Activated CD4-positive, alpha-beta memory T cell treated with anti-CD3 and anti-CD28 coated beads, Interleukin-2, amount 10 ng/mL, durations not matched to agents 7 days and 5 days (primary cell): ENCODE measurements at regions of chr7 and their contacts with region 1.

Region 1: DNA sequence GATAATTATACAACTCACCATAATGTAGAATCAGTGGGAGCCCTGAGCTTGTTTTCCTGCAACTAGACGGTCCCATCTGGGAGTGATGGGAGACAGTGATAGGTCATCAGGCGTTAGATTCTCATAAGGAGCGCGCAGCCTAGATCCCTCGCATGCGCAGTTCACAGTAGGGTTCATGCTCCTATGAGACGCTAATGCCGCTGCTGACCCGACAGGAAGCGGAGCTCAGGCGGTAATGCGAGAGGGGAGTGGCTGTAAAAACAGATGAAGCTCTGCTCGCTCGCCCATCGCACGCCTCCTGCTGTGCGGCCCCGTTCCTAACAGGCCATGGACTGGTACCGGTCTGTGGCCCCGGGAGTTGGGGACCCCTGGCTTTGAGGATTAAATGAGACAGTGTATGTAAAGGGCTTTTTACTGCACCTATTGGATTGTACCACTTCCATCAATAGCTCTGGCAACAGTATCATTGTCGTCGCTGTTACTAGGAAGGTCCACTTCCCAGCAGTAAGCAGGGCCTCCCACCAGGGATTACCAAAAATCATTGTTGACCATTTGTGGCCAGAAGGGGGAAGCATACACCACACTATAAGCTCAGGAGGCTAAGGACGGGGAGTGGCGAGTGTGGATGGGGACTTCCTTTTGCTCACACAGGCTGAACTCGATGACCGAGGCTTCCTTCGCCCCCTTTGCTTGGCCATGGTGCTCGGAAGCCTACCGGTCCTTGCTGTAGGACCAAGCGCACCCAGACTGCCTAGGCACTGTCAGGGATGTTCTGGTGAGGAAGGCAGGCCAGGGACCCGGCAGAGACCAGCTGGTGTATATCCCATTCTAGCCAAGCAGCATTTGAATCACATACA is 26.4 kb downstream of the AKR1B1 start:
- DNase-seq: peak; percentile 78
- H3K4me3 Mint-ChIP-seq: peak overlapping the region; percentile 68
- H3K27ac Mint-ChIP-seq: peak overlapping the region; percentile 82
- H3K4me1 Mint-ChIP-seq: peaks cover 17% of the 10 kb centered on the region
- H3K27me3 Mint-ChIP-seq: peaks cover 7% of the 10 kb centered on the region

Region 2: DNA sequence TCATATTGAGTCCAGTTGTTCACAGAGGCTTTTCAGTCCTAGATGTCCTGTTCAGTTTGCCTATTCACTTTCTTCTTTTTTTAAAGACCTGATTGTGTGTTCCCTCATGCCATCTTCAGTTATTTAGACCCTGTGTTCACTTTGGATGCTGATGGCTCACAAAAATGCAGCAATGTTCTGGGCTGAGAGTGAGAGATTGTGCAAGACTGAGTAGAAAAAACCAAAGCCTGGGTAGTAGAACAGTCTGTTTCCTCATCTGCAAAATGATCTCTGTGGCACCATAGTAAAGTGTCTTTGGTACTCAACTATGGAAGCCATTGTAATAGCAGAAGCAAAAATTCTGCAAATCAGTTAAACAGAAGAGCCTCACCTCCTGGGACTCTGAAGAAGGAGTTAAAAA is 16.8 kb before region 1 on chr7:
- CTCF ChIA-PET with region 1: no interaction called
- POLR2A ChIA-PET with region 1: no interaction called
- DNase-seq: no peak
- H3K4me3 Mint-ChIP-seq: no peak overlapping the region
- H3K27ac Mint-ChIP-seq: no peak overlapping the region
- H3K4me1 Mint-ChIP-seq: no peaks in the 10 kb centered on the region
- H3K27me3 Mint-ChIP-seq: peaks cover 13% of the 10 kb centered on the region

Region 3: DNA sequence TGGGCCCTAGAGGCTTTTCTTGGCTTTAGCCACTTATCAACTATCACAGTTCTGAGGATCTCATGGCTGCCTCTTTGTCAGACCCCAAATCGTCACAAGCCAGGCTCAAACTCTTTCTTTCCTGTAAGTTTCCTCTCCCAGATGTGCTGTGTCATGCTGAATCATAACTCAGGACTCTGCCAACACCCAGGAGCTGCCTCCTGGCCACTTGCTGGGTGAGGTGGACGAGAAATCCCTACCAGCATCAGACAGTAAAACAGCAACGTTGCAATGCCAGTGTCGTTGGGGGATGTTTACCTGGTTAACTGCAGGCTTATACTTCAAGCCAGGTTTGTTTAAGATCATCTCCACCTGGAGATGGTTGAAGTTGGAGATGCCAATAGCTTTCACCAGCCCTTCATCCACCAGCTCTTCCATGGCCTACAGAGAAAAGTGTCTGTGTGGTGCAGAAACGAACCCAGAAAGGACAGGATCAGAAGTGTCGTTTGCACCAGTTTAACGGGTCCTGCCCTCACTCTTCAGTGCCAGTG is 16.2 kb after region 1 on chr7:
- CTCF ChIA-PET with region 1: interaction called, 11 read pairs
- POLR2A ChIA-PET with region 1: no interaction called
- DNase-seq: no peak
- H3K4me3 Mint-ChIP-seq: no peak overlapping the region
- H3K27ac Mint-ChIP-seq: no peak overlapping the region
- H3K4me1 Mint-ChIP-seq: peaks cover 4% of the 10 kb centered on the region
- H3K27me3 Mint-ChIP-seq: no peaks in the 10 kb centered on the region

Region 4: DNA sequence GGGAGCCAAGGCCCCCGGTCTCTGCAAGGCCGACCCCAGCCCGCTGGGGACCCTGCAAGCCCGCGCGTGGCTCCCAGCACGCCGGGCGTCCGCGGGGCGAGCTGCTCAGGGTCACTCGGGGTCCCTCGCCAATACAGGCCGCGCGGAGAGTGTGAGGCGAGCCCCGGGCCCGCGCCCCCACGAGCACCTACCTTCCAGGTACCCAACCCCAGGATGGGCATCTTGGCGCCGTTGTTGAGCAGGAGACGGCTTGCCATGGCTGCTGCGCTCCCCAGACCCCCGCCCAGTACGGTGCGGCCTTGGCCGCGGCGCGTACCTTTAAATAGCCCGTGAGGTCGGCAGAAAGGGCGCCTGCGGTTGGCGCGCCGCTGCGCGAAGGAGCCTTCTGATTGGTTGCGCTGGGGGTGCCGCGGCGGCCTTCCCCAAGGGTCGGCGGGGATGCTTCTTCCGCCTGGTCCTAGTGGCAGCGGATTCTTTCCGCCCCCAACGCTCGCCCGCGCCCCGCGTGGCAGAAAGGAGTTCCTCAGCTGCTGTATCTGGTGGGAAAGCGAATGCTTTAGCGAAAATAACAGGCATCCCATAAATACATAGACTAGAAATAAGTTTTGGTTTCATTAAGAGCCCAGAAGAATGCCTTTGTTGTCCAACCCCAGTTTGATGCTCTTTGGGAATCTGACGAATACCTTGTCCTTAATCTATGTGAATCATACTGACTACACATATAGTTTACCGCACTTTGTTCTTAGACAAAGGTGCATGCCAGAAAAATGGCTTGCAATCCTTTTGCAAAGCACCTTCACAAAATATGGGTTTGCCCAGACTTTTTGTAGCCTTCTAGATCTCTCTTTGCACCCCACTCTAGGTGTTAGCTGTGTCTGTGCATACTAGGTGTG is 26.5 kb after region 1 on chr7 and contains the start of gene AKR1B1:
- CTCF ChIA-PET with region 1: interaction called, 30 read pairs
- POLR2A ChIA-PET with region 1: interaction called, 9 read pairs
- DNase-seq: peak; percentile 90
- H3K4me3 Mint-ChIP-seq: peak within 1 kb of the TSS; percentile 79
- H3K27ac Mint-ChIP-seq: peak within 1 kb of the TSS; percentile 68
- H3K4me1 Mint-ChIP-seq: peaks cover 43% of the 10 kb centered on the region
- H3K27me3 Mint-ChIP-seq: no peaks in the 10 kb centered on the region
- total RNA-seq, gene AKR1B1: 89.5 to 89.9 TPM

Region 5: GRCh38 chr7:134514663-134515062 is 82.1 kb after region 1 on chr7:
- CTCF ChIA-PET with region 1: interaction called, 55 read pairs
- POLR2A ChIA-PET with region 1: interaction called, 8 read pairs
- DNase-seq: no peak
- H3K4me3 Mint-ChIP-seq: no peak overlapping the region
- H3K27ac Mint-ChIP-seq: no peak overlapping the region
- H3K4me1 Mint-ChIP-seq: peaks cover 2% of the 10 kb centered on the region
- H3K27me3 Mint-ChIP-seq: peaks cover 18% of the 10 kb centered on the region

Region 6: DNA sequence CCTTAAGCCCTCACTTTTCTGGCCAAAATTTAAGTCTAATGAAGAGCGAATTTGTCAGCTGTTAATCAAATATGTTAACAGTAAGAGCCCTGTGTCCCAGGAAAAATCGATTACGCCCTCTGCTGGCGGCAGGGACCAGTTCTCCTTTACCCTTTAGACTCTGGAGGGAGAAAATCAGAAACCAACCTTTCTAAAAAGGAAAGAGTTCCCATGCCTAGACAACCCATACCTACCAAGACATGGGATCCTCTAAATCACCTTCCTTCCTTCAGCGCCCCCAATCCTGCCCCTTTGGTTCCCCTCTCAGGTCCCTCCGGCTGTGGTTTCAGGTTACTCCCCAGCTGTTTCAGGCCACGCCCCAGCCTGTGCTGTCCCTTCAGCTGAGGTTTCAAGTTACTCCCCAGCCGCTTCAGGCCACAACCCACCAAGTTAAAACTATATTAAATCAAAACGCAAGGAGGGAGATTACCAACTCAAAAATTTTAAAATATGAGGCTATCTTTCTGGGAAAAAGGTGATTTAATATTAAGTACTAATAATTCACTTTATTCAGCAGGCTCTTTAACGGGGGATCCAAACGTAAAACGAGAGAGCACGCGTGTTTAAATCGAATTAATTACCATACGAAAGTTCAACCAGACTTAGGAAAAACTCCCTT is 115.0 kb after region 1 on chr7:
- CTCF ChIA-PET with region 1: interaction called, 56 read pairs
- POLR2A ChIA-PET with region 1: no interaction called
- DNase-seq: peak; percentile 66
- H3K4me3 Mint-ChIP-seq: no peak overlapping the region
- H3K27ac Mint-ChIP-seq: no peak overlapping the region
- H3K4me1 Mint-ChIP-seq: peaks cover 10% of the 10 kb centered on the region
- H3K27me3 Mint-ChIP-seq: peaks cover 27% of the 10 kb centered on the region

Region 7: GRCh38 chr7:134605973-134606923 is 173.7 kb after region 1 on chr7:
- CTCF ChIA-PET with region 1: interaction called, 40 read pairs
- POLR2A ChIA-PET with region 1: no interaction called
- DNase-seq: peak; percentile 61
- H3K4me3 Mint-ChIP-seq: peak overlapping the region; percentile 22
- H3K27ac Mint-ChIP-seq: no peak overlapping the region
- H3K4me1 Mint-ChIP-seq: peaks cover 3% of the 10 kb centered on the region
- H3K27me3 Mint-ChIP-seq: peaks cover 60% of the 10 kb centered on the region